ENCODE measurements at regions of chr5 and their contacts with region 1.

Region 1: DNA sequence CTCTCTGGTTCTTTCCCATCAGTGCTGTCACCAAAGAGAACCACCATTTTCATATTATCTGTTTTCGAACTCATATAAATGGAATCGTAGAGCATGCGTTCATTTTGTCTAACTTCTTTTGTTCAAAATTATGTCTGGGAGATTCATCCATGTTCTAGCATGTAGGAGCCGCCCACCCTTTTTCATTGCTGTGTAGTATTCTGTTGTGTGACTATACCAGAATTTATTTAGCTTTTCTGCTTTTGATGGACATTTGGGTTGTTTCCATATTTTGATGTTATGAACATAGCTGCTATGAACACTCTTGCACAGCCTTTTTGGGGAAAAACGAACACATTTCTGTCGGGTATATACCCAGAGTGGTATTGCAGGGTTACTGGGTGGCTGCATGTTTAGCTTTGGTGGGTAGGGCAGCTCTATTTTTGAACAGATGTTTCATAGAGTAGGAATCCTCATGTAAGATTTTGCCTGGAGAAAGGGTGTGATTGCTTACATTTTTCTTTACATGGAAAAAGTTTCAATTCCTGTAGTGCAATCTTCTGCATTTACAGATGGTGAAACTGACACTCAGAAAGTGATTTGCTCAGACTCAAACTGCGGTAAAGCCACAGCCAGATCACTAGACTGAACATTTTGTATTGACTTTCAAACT is 100.2 kb upstream of the IL12B start:
- DNase-seq: no peak
- ATAC-seq: no peak

Region 2: DNA sequence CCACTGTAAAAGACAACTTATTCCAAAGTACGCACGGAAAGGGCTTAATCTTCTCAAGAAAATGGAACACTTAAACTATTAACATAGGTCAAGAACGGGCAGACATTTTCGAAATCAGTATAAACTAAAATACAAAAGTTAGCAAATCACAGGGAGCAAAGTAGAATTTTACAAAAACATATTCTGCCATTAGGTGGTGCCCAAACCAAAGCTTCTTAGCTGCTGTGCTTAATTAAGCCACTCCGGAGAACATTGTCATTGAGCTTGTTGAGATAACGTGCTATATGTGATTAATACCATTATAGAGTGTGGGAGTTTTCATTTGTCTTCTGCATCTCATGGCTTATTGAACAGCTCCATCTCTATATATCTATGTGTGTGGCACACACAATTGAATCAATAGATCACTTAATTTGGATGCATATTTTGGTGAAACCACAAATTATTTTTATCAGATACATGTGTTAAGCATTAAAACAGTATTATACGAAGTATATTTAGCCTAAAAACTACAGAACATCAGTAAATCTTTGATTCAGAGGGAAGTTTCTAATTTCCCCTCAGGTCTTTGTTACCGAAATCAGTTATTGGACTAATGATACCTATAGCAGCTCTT is 144.0 kb before region 1 on chr5:
- intact Hi-C with region 1: loop called (anchors 10 kb)
- DNase-seq: no peak
- ATAC-seq: peak; percentile 34

Region 3: GRCh38 chr5:159331093-159331973 is 99.2 kb before region 1 on chr5:
- intact Hi-C with region 1: loop called (anchors 10 kb)
- DNase-seq: peak; percentile 85
- ATAC-seq: peak; percentile 92

Measured in Right ventricle myocardium inferior (tissue), 1 donor.